CD4-positive, alpha-beta T cell (primary cell): ENCODE measurements at regions of chrX and their contacts with region 1.

Region 1: GRCh38 chrX:129931411-129932015 is 25.5 kb downstream of the UTP14A start:
- DNase-seq: peak; percentile 16 to 83 (median 46)
- ATAC-seq: peak; percentile 38
- H3K4me3 ChIP-seq: peak overlapping the region; percentile 73
- H3K4me3 Mint-ChIP-seq: peak overlapping the region; percentile 87
- H3K27ac ChIP-seq: peak overlapping the region; percentile 21 to 40
- H3K27ac Mint-ChIP-seq: peak overlapping the region; percentile 83
- H3K4me1 ChIP-seq: peaks cover 9% of the 10 kb centered on the region
- H3K4me1 Mint-ChIP-seq: peaks cover 5% of the 10 kb centered on the region
- H3K27me3 ChIP-seq: no peaks in the 10 kb centered on the region
- H3K27me3 Mint-ChIP-seq: no peaks in the 10 kb centered on the region
- CTCF ChIP-seq: no peak

Region 2: GRCh38 chrX:129905787-129906580 is 25.5 kb before region 1 on chrX and contains the start of gene UTP14A:
- CTCF ChIA-PET with region 1: no interaction called
- POLR2A ChIA-PET with region 1: no interaction called
- intact Hi-C with region 1: no loop called
- DNase-seq: peak; percentile 61 to 94 (median 76)
- ATAC-seq: peak; percentile 91
- H3K4me3 ChIP-seq: peak within 1 kb of the TSS; percentile 74
- H3K4me3 Mint-ChIP-seq: peak within 1 kb of the TSS; percentile 94
- H3K27ac ChIP-seq: peak within 1 kb of the TSS; percentile 37 to 41
- H3K27ac Mint-ChIP-seq: peak within 1 kb of the TSS; percentile 84
- H3K4me1 ChIP-seq: peaks cover 10% of the 10 kb centered on the region
- H3K4me1 Mint-ChIP-seq: peaks cover 7% of the 10 kb centered on the region
- H3K27me3 ChIP-seq: no peaks in the 10 kb centered on the region
- H3K27me3 Mint-ChIP-seq: no peaks in the 10 kb centered on the region
- CTCF ChIP-seq: no peak
- total RNA-seq, gene UTP14A: 8.8 to 9.8 TPM

Region 3: GRCh38 chrX:129953881-129954280 is 22.4 kb after region 1 on chrX:
- CTCF ChIA-PET with region 1: no interaction called
- POLR2A ChIA-PET with region 1: interaction called, 7 read pairs
- intact Hi-C with region 1: loop called in 1 of 2 experiments (anchors 2 kb)
- DNase-seq: no peak
- ATAC-seq: no peak
- H3K4me3 ChIP-seq: no peak overlapping the region
- H3K4me3 Mint-ChIP-seq: peak overlapping the region; percentile 77
- H3K27ac ChIP-seq: no peak overlapping the region
- H3K27ac Mint-ChIP-seq: peak overlapping the region; percentile 96
- H3K4me1 ChIP-seq: peaks cover 27% of the 10 kb centered on the region
- H3K4me1 Mint-ChIP-seq: peaks cover 11% of the 10 kb centered on the region
- H3K27me3 ChIP-seq: no peaks in the 10 kb centered on the region
- H3K27me3 Mint-ChIP-seq: peaks cover 4% of the 10 kb centered on the region
- CTCF ChIP-seq: no peak

Region 4: GRCh38 chrX:129961180-129962083 is 29.9 kb after region 1 on chrX:
- CTCF ChIA-PET with region 1: no interaction called
- POLR2A ChIA-PET with region 1: interaction called, 10 read pairs
- intact Hi-C with region 1: no loop called
- DNase-seq: peak in 13 of 14 experiments; percentile 30 to 83 (median 57)
- ATAC-seq: peak; percentile 87
- H3K4me3 ChIP-seq: peak overlapping the region; percentile 48
- H3K4me3 Mint-ChIP-seq: peak overlapping the region; percentile 79
- H3K27ac ChIP-seq: peak overlapping the region; percentile 59 to 64
- H3K27ac Mint-ChIP-seq: peak overlapping the region; percentile 85
- H3K4me1 ChIP-seq: peaks cover 33% of the 10 kb centered on the region
- H3K4me1 Mint-ChIP-seq: peaks cover 29% of the 10 kb centered on the region
- H3K27me3 ChIP-seq: no peaks in the 10 kb centered on the region
- H3K27me3 Mint-ChIP-seq: no peaks in the 10 kb centered on the region
- CTCF ChIP-seq: no peak

Region 5: DNA sequence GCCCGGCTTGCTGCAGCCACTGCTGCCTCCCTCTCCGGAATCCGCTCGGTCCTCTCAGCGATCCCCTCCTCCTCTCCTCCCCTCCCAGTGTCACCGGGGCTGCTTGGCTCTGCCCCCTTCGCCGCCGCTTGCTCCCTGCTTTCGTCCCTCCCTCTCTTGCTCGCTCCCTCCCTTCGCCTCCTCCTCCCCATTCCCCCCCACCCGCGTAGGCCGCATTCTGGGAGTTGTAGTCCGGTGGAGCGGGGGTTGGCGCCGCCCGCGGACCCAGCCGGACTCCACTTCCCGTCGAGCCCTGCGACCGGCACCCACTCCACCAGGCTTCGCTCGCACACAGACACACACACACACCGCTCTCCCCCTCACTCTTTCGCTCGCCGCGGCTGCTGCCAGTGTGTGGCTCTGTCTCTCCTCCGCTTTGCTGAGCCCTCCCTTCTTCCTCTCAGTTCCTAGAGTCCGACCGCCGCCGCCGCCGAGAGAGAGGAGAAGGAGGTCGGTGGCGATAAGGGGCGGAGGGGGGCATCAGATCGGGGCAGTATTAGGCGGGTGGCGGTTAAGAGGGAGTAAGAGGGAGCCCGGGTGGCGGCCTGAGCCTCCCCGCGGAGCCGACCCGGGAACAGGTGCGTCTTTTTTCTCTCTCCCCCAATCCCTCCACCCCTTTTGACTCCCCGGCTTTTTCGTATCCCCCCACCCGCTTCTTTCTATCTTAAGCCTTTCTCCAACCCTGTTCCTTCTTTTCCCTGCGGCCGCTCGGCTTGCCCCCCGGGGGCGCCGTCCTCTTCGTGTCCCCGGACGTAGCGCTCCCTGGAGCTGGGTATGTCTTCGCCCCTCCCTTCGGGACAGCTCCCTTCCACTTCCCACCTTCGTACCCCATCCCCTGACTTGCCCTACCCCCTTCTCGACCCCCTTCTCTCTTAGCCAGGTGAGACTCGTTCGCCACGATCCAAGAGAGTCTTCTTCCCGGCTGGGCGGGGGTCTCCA is 51.0 kb after region 1 on chrX and contains the start of gene BCORL1:
- CTCF ChIA-PET with region 1: no interaction called
- POLR2A ChIA-PET with region 1: no interaction called
- intact Hi-C with region 1: loop called in 1 of 2 experiments (anchors 2 kb)
- DNase-seq: peak; percentile 79 to 96 (median 84)
- ATAC-seq: peak; percentile 91
- H3K4me3 ChIP-seq: no peak within 1 kb of the TSS
- H3K4me3 Mint-ChIP-seq: no peak within 1 kb of the TSS
- H3K27ac ChIP-seq: no peak within 1 kb of the TSS
- H3K27ac Mint-ChIP-seq: peak within 1 kb of the TSS; percentile 74
- H3K4me1 ChIP-seq: peaks cover 34% of the 10 kb centered on the region
- H3K4me1 Mint-ChIP-seq: peaks cover 38% of the 10 kb centered on the region
- H3K27me3 ChIP-seq: no peaks in the 10 kb centered on the region
- H3K27me3 Mint-ChIP-seq: no peaks in the 10 kb centered on the region
- CTCF ChIP-seq: no peak
- total RNA-seq, gene BCORL1: 3.4 to 3.5 TPM

Region 6: GRCh38 chrX:130060122-130061069 is 128.9 kb after region 1 on chrX:
- CTCF ChIA-PET with region 1: interaction called, 8 read pairs
- POLR2A ChIA-PET with region 1: interaction called, 4 read pairs
- intact Hi-C with region 1: loop called in 1 of 2 experiments (anchors 1 kb)
- DNase-seq: peak; percentile 50 to 87 (median 77)
- ATAC-seq: peak; percentile 82
- H3K4me3 ChIP-seq: peak overlapping the region; percentile 45
- H3K4me3 Mint-ChIP-seq: peak overlapping the region; percentile 71
- H3K27ac ChIP-seq: no peak overlapping the region
- H3K27ac Mint-ChIP-seq: no peak overlapping the region
- H3K4me1 ChIP-seq: peaks cover 13% of the 10 kb centered on the region
- H3K4me1 Mint-ChIP-seq: peaks cover 10% of the 10 kb centered on the region
- H3K27me3 ChIP-seq: no peaks in the 10 kb centered on the region
- H3K27me3 Mint-ChIP-seq: no peaks in the 10 kb centered on the region
- CTCF ChIP-seq: peak; percentile 78